ENCODE measurements at regions of chr20 and their contacts with region 1.

Region 1: DNA sequence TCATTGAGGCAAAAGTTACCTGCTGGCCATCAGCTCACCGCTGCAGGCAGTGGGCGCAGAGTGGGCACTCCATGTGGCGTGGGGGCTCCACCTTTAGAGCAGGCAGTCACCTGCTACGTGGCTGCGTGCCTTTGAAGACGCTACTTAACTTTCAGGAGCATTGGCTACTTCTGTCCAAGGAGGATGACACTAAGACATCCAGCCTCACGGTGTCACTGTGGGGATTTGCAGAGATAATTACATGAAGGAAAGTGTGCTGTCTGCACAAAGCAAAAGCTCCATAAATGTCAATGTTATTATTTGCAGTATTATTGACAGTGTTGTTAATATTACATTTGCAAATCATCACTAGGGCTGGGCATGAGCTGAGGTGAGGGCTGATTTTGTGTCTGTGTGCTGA is 166.0 kb upstream of the SYNDIG1 start:
- DNase-seq: no peak
- H3K4me3 ChIP-seq: no peak overlapping the region
- H3K27ac ChIP-seq: no peak overlapping the region
- H3K4me1 ChIP-seq: no peaks in the 10 kb centered on the region
- H3K27me3 ChIP-seq: peaks cover 6% of the 10 kb centered on the region
- CTCF ChIP-seq: no peak
- EP300 ChIP-seq: no peak
- POLR2A ChIP-seq: no peak

Region 2: DNA sequence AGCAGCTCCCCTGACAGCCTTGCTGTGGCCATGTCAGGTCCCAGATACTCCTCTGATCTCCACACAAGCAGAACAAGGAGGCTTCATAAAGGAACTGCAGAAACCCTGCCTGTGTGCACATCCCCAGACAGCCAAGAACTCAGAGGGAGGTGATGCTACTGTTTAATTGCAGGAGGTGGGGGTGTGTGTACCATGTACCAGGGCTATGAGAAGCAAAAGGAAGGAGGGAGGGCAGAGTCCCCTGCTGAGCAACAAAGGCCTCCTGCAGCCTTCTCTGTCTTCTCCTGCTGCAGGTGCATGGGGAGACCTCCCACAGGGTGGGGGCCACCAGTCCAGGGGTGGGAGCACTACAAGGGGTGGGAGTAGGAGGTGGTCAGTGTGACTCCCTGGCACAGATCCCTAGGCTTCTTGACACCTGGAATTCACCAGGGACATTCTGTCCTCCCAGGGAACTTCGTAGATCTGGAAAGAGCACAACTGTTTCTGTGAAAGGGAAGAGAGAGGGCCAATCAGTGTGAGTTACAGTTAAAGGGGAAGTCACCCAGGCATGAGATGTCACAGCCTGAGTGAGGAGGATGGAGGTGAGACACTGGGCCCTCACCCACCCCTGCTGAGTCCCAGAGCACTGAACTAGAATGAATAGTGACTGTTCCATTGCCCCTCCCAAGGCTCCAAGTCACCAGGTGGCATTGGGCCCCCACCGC is 479.6 kb before region 1 on chr20:
- in situ Hi-C with region 1: no loop called
- intact Hi-C with region 1: no loop called
- DNase-seq: no peak
- H3K4me3 ChIP-seq: no peak overlapping the region
- H3K27ac ChIP-seq: no peak overlapping the region
- H3K4me1 ChIP-seq: no peaks in the 10 kb centered on the region
- H3K27me3 ChIP-seq: no peaks in the 10 kb centered on the region
- CTCF ChIP-seq: no peak
- EP300 ChIP-seq: no peak
- POLR2A ChIP-seq: no peak

Region 3: DNA sequence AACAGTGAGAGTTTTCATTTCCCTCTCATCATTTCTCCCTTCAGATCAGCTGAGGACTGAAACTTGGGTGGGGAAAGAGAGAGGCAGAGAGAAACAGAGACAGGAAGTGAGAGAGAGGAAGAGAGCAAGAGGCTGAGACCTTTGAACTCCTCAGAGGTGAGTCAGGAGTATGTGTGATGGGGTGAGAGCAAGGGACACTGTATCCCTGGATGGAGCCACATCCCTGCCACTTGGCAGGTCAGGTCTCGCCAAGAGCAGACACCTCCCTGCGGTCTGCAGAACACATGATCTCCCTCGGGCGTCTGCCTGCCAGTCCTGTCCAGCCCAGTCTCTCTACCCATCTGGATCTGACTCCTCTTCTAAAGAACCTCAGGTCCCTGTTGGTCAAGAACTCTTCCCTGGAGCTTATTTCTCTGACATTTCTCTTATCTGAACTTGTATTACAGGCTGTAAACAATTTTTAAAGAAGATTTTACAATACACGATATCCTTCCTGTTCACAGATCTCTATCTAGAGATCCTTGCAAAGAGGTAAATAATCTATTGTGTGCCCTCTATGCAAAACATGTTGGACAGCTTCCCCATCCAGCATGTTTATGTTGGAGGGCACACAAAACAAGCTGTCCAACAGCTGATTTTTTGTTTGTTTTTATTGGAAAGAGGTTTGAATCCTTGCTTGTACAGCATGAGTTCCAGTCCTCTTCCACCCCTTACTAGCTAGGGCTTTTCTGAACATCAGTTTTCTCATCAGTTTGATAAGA is 103.5 kb after region 1 on chr20:
- in situ Hi-C with region 1: loop called in 1 of 4 experiments (anchors 25 kb)
- intact Hi-C with region 1: no loop called
- DNase-seq: no peak
- H3K4me3 ChIP-seq: no peak overlapping the region
- H3K27ac ChIP-seq: no peak overlapping the region
- H3K4me1 ChIP-seq: no peaks in the 10 kb centered on the region
- H3K27me3 ChIP-seq: no peaks in the 10 kb centered on the region
- CTCF ChIP-seq: no peak
- EP300 ChIP-seq: no peak
- POLR2A ChIP-seq: no peak

Measured in transverse colon (tissue), 4 donors.